Activated CD4-positive, alpha-beta T cell treated with anti-CD3 and anti-CD28 coated beads for 36 hours (primary cell): ENCODE measurements at regions of chr5 and their contacts with region 1.

Region 1: DNA sequence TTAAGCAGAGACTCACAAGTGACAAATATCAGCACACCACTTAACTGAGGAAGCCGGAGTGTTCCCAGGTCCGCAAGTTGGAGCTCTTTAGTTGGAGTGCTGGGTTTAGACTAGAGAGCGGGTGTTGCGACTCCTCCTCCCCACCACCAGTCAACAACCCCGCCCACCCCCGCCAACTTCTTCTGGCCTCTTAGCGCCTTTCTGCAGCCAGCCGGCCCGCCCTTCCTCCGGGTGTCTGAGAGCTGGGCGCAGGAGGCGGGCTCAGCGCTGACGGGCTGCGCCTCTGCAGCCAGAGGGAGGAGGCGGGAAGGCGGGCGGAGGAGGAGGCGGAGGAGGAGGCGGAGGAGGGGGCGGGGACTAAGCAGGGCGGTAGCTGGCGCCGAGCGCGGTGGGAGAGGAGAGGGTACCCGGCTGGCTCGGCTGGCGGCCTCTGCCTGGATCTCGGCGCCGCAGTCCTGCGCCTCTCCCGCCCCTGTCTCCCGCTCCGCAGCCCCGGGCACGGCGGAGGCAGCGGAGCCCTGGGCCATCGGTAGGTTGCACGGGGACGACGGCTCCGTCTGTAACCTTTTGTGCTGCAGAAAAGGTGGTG is at the start of gene MACIR:
- DNase-seq: peak; percentile 96
- ATAC-seq: peak; percentile 94
- H3K4me3 Mint-ChIP-seq: peak within 1 kb of the TSS; percentile 87
- H3K27ac Mint-ChIP-seq: peak within 1 kb of the TSS; percentile 72
- H3K4me1 Mint-ChIP-seq: peaks cover 28% of the 10 kb centered on the region
- H3K27me3 Mint-ChIP-seq: peaks cover 2% of the 10 kb centered on the region
- total RNA-seq, gene MACIR: 9.4 to 9.8 TPM

Region 2: GRCh38 chr5:102755686-102756371 is 502.6 kb before region 1 on chr5:
- CTCF ChIA-PET with region 1: no interaction called
- POLR2A ChIA-PET with region 1: no interaction called
- intact Hi-C with region 1: loop called (anchors 1 to 5 kb)
- DNase-seq: peak; percentile 90
- ATAC-seq: peak; percentile 89
- H3K4me3 Mint-ChIP-seq: peak overlapping the region; percentile 84
- H3K27ac Mint-ChIP-seq: peak overlapping the region; percentile 98
- H3K4me1 Mint-ChIP-seq: peaks cover 52% of the 10 kb centered on the region
- H3K27me3 Mint-ChIP-seq: peaks cover 9% of the 10 kb centered on the region

Region 3: DNA sequence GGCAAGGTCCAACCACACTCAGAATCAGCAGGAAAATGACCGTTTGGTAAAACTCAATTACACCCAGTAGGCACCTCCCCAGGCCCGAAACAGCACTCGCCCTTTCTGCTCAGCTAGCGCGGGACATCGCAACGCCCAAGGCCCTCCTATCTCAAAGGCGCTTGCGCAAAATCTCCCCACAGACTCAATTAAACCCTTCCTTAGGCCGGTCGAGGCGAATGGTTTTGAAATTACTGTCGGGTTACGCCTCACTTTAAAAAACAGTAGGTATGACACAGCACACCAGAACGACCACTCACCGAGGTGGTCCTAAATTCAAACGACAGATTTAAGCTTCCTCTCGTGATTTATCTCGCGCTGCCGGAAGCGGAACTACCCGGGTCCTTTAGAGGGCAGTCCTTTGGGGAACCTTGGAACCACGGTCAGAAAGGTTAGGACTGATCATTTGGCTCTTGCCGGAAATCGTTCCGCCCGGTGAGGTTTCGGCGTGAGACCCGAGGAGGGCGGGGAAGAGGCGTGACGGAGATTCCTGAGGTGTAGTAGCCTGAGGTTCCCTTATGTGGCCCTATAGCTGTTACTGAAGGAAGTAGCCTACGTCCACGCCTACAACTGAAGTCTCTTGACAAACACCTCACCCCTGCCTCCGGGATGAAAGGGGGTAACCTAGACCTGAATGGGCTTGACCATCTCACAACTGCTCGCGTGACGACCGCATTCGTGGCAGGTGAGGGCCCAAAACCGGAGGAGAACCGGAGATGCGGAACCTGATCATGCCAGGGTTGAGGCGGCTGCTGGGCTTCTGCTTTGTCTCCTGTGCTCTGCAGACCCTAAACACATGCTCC is 138.5 kb before region 1 on chr5 and contains the starts of genes GIN1 and PPIP5K2:
- CTCF ChIA-PET with region 1: no interaction called
- POLR2A ChIA-PET with region 1: interaction called, 10 read pairs
- intact Hi-C with region 1: loop called (anchors 1 to 2 kb)
- DNase-seq: peak; percentile 97
- ATAC-seq: peak; percentile 91
- H3K4me3 Mint-ChIP-seq: peak within 1 kb of the TSS; percentile 76
- H3K27ac Mint-ChIP-seq: peak within 1 kb of the TSS; percentile 95
- H3K4me1 Mint-ChIP-seq: peaks cover 39% of the 10 kb centered on the region
- H3K27me3 Mint-ChIP-seq: no peaks in the 10 kb centered on the region
- total RNA-seq, gene GIN1: 9.0 to 9.7 TPM
- total RNA-seq, gene PPIP5K2: 49.5 to 53.4 TPM

Region 4: GRCh38 chr5:103475629-103476240 is 217.3 kb after region 1 on chr5:
- CTCF ChIA-PET with region 1: interaction called, 15 read pairs
- POLR2A ChIA-PET with region 1: no interaction called
- intact Hi-C with region 1: no loop called
- DNase-seq: no peak
- ATAC-seq: no peak
- H3K4me3 Mint-ChIP-seq: no peak overlapping the region
- H3K27ac Mint-ChIP-seq: no peak overlapping the region
- H3K4me1 Mint-ChIP-seq: no peaks in the 10 kb centered on the region
- H3K27me3 Mint-ChIP-seq: peaks cover 6% of the 10 kb centered on the region

Region 5: GRCh38 chr5:103562453-103563157 is 304.1 kb after region 1 on chr5 and contains the start of gene NUDT12:
- CTCF ChIA-PET with region 1: no interaction called
- POLR2A ChIA-PET with region 1: no interaction called
- intact Hi-C with region 1: loop called in 1 of 2 experiments (anchors 5 kb)
- DNase-seq: peak; percentile 78
- ATAC-seq: peak; percentile 93
- H3K4me3 Mint-ChIP-seq: peak within 1 kb of the TSS; percentile 84
- H3K27ac Mint-ChIP-seq: peak within 1 kb of the TSS; percentile 93
- H3K4me1 Mint-ChIP-seq: peaks cover 19% of the 10 kb centered on the region
- H3K27me3 Mint-ChIP-seq: no peaks in the 10 kb centered on the region
- total RNA-seq, gene NUDT12: 4.7 to 6.1 TPM